ENCODE measurements at regions of chr16 and their contacts with region 1.

Region 1: DNA sequence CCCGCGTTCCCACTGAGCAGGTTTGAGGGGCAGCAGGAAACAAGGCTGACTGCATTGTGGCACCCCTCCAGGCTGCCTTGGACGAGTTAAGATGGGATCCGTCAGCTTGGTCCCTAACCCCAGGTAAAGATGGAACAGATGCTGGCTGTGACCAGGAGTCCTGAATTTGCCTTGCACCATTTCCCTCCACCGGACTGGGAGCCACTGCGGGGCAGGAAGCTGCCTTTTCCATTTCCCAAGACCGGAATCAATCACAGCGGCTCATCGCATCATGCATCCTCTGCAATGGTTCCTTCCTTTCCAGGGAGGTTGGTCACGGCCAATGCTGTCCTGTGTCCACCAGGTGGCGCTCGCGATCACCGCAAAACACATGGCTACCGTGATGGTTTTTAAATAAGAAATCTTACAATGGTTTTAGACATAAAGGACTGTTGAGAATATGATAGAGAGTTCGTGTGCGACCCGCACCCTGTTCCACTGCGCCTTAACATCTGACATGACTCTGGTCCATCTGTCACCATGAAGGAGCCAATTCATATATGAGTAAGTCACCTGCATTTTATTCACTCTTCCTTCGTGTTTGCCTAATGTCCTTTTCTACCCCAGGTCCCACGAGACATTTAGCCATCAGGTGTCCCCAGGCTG is 6.8 kb upstream of the MEAK7 start:
- DNase-seq: peak; percentile 76 to 85
- ATAC-seq: peak; percentile 88 to 90
- H3K4me3 ChIP-seq: peak overlapping the region; percentile 14; the same call in 1 of the 3 replicates
- H3K27ac ChIP-seq: peak overlapping the region; percentile 36 to 77
- H3K4me1 ChIP-seq: peaks cover 7% of the 10 kb centered on the region
- CTCF ChIP-seq: peak; percentile 87
- EP300 ChIP-seq: no peak
- POLR2A ChIP-seq: no peak
- RAD21 ChIP-seq: peak; percentile 87 to 95

Region 2: DNA sequence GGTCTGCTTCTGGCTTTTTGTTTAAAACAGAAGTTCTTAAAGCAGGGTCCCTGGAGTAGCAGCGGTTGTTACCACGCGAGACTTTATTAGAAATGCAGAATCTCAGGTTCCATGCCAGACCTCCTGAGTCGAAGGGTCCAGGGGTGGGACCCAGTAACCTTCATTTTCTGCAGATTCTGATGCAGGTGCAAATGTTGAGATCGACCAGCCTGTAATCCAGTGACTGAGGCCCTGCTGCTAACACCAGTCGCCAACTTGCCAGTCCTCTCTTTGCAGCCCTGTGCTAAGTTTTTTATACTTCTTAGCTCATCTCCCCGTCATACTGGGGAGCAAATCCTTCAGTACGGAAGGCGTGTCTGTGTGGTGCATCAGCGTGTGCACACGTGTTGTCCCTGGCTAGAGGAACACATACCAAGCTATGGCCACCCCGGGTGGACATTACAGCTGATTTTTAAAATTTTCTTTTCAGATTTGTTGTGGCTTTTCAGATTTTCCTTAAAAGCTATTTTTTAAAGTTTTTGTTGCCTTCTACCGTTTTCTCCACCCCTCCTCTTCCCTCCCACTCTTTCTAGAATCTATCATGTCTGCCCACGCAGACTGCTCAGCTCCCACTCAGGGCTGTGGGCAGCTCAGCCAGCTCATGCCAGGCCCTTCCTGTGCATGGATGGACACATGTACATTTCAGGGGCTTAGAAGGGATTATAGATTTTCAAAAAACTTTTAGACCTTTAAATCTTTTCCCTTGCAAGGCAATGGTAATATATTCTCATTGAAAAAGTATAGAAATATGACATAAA is 64.5 kb before region 1 on chr16:
- CTCF ChIA-PET with region 1: no interaction called
- POLR2A ChIA-PET with region 1: no interaction called
- DNase-seq: no peak
- ATAC-seq: no peak
- H3K4me3 ChIP-seq: no peak overlapping the region
- H3K27ac ChIP-seq: no peak overlapping the region
- H3K4me1 ChIP-seq: peaks cover 3% of the 10 kb centered on the region; the same call in 1 of the 3 replicates
- CTCF ChIP-seq: no peak
- EP300 ChIP-seq: no peak
- POLR2A ChIP-seq: no peak
- RAD21 ChIP-seq: no peak

Region 3: DNA sequence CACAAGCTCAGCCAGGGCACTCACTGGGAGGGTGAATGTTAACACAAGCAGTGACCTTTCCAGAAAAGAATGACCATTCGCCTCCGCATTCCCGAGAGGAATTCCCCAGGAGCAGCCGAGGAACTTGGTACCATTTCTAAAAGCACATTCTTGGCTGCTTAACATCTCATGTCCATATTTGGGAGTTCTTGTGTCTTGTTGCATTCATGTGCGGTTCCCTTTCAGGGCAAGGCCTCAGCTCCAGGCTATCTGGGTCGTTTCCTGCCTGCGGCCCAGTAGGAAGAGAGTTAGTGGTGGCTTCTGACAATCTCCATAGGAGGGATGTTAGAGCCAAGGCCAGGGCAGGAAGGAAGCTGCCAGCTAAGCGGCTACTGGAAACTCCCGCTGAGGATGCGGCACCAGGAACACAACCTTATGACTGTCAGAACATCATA is 21.0 kb after region 1 on chr16:
- CTCF ChIA-PET with region 1: interaction called, 115 read pairs
- POLR2A ChIA-PET with region 1: interaction called, 3 read pairs
- DNase-seq: peak; percentile 62 to 85
- ATAC-seq: peak; percentile 78 to 93
- H3K4me3 ChIP-seq: no peak overlapping the region
- H3K27ac ChIP-seq: peak overlapping the region; percentile 39 to 80
- H3K4me1 ChIP-seq: peaks cover 21% of the 10 kb centered on the region
- CTCF ChIP-seq: no peak
- EP300 ChIP-seq: no peak
- POLR2A ChIP-seq: no peak
- RAD21 ChIP-seq: no peak

Region 4: GRCh38 chr16:84562174-84562815 is 51.0 kb after region 1 on chr16:
- CTCF ChIA-PET with region 1: interaction called, 25 read pairs
- POLR2A ChIA-PET with region 1: interaction called, 4 read pairs
- DNase-seq: no peak
- ATAC-seq: no peak
- H3K4me3 ChIP-seq: no peak overlapping the region
- H3K27ac ChIP-seq: no peak overlapping the region
- H3K4me1 ChIP-seq: no peaks in the 10 kb centered on the region
- CTCF ChIP-seq: no peak
- EP300 ChIP-seq: no peak
- POLR2A ChIP-seq: no peak
- RAD21 ChIP-seq: no peak

Region 5: DNA sequence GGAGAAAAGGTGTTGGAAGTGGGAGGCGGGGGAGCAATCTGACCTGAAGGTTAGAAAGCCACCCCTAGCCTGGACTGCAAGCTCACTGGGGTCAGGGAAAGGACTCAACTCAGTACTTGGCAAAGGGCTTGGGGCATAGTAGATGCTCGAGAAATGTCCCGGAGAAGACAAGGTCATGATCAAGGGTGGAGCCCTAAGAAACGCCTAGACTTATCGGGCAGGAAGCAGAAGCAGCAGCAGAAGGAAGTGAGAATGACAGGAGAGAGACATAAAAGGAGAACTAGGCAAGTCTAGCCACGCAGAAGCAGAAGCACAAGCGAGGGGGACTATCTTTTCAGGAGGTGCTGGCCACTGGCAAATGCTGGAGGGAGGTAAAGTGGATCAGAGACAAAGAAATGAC is 96.4 kb after region 1 on chr16:
- CTCF ChIA-PET with region 1: interaction called, 22 read pairs
- POLR2A ChIA-PET with region 1: no interaction called
- DNase-seq: no peak
- ATAC-seq: no peak
- H3K4me3 ChIP-seq: no peak overlapping the region
- H3K27ac ChIP-seq: no peak overlapping the region
- H3K4me1 ChIP-seq: peaks cover 25% of the 10 kb centered on the region
- CTCF ChIP-seq: no peak
- EP300 ChIP-seq: no peak
- POLR2A ChIP-seq: no peak
- RAD21 ChIP-seq: no peak

Region 6: DNA sequence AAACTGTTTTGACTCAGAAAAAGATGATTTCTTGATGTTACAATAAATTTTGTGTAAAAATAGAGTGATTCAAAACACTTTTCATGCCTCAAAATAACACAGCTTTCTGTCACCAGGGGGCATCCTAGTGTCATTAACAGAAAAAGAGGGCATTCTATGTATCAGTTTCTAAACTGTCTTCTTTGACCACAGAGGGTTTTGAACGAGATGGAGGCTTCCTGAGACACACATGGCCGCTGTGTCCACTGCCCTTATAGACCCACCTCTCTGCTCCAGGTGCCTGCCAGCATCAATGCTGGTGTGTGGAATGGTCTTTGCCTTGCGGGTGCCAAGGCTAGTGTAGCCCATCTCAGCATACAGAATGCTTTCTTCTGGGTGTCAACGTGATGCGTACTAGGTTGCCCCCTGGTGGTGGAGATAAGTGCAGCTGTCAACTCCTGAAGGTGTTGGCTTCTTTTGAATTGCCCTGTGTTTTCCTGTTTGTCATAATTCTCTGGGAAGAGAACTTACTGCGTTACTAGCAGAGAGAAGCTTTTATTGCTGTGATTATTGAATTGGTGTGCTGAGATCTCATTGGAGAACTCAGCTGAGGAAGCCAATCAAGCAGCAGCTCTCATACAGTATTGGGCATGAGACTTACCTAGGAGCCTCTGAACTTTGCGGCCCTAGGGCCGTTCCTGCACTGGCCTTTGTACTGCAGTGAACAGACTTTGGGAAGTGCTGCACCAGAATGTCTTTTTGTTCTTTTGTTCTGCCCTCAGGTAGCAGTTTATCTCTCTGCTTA is 227.1 kb after region 1 on chr16:
- CTCF ChIA-PET with region 1: interaction called, 60 read pairs
- POLR2A ChIA-PET with region 1: no interaction called
- DNase-seq: peak; percentile 84 to 86
- ATAC-seq: peak; percentile 91
- H3K4me3 ChIP-seq: no peak overlapping the region
- H3K27ac ChIP-seq: no peak overlapping the region; a peak in 1 of 6 replicates
- H3K4me1 ChIP-seq: peaks cover 79% of the 10 kb centered on the region
- CTCF ChIP-seq: peak; percentile 95
- EP300 ChIP-seq: no peak
- POLR2A ChIP-seq: no peak
- RAD21 ChIP-seq: peak; percentile 69 to 70

Measured in A549 (cell line).